ENCODE measurements at regions of chr11 and their contacts with region 1.

Region 1: GRCh38 chr11:83819933-83820549 is 533.9 kb upstream of the CCDC90B start:
- H3K4me3 ChIP-seq: no peak overlapping the region
- H3K27ac ChIP-seq: no peak overlapping the region
- H3K4me1 ChIP-seq: no peaks in the 10 kb centered on the region
- CTCF ChIP-seq: peak; percentile 25; the same call in 1 of the 2 replicates

Region 2: GRCh38 chr11:82718307-82718706 is 1101.7 kb before region 1 on chr11:
- CTCF ChIA-PET with region 1: interaction called, 15 read pairs
- POLR2A ChIA-PET with region 1: no interaction called
- H3K4me3 ChIP-seq: no peak overlapping the region
- H3K27ac ChIP-seq: no peak overlapping the region
- H3K4me1 ChIP-seq: no peaks in the 10 kb centered on the region
- CTCF ChIP-seq: no peak

Region 3: DNA sequence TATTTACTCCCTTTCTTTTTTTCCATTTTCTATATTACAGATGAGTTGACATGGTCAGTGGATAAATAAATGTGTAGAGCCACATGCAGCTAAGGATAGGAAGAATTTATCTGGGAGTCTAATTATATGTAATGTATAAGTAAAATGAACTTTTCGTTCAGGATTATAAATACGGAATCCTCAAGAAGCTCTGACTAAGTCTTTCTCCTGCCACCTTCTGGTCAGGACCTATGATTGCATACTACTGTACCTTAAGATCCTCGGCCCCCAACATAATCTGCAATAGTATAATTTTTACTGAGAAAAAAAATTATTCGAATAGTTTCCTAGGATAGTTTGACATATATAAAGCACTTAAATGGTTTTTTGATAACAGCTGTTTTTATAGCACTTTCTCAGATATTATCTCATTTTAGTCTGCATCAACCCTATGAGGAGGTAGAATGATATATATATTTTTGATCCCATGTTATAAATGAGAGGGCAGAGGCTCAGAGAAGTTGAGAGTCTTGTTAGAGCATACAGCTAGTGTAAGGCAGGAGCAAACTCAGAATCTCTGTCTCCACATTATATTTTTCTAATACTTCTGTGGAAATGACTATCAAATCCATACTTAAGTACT is 570.0 kb before region 1 on chr11:
- CTCF ChIA-PET with region 1: interaction called, 26 read pairs
- POLR2A ChIA-PET with region 1: no interaction called
- H3K4me3 ChIP-seq: no peak overlapping the region
- H3K27ac ChIP-seq: no peak overlapping the region
- H3K4me1 ChIP-seq: no peaks in the 10 kb centered on the region
- CTCF ChIP-seq: no peak

Region 4: GRCh38 chr11:83724008-83724461 is 96.0 kb before region 1 on chr11:
- CTCF ChIA-PET with region 1: interaction called, 14 read pairs
- POLR2A ChIA-PET with region 1: no interaction called
- H3K4me3 ChIP-seq: no peak overlapping the region; the same call in 1 of the 2 replicates
- H3K27ac ChIP-seq: no peak overlapping the region
- H3K4me1 ChIP-seq: peaks cover 2% of the 10 kb centered on the region; the same call in 1 of the 2 replicates
- CTCF ChIP-seq: no peak

Region 5: GRCh38 chr11:83836883-83837654 is 17.0 kb after region 1 on chr11:
- CTCF ChIA-PET with region 1: interaction called, 11 read pairs
- POLR2A ChIA-PET with region 1: no interaction called
- H3K4me3 ChIP-seq: no peak overlapping the region
- H3K27ac ChIP-seq: no peak overlapping the region
- H3K4me1 ChIP-seq: no peaks in the 10 kb centered on the region
- CTCF ChIP-seq: 0 out of 2 replicates have a peak, but pooled peaks have one; percentile 50

Measured in HEK293 (cell line).